ENCODE measurements at regions of chr20 and their contacts with region 1.

Region 1: DNA sequence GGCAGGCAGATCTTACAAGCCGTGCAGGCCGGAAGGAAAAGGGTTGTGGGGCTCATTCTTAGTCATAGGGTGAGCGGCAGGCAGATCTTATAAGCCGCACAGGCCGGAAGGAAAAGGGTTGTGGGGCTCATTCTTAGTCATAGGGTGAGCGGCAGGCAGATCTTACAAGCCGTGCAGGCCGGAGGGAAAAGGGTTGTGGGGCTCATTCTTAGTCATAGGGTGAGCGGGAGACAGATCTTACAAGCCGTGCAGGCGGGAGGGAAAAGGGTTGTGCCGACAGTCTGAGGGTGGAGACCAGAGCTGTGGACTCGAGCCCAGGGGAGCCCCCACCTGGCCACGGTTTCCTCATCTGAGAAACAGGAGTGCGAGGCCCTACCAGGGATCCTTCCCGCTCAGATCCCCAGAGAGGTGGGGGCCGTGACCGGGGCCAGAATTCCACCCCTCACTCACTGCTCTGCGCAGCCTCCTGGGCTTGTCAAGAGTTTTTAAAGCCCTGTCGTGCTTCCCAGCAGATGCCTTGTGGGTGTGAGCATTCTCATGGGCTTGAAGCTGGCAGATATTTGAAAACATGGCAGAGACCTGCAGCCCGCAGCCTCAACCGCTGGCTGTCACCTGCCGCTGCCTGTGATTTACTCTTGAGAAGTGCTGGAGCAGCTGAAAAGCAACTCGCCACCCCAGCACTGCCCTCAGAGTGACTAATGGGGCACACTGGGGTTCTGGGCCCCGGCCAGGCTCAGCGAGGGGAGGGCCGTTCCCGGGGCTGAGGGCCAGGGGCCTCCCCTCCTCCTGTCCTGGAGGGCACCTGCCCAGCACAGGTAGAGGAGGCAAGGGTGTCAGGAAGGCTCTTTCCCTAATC is 31.9 kb downstream of the NTSR1 start:
- DNase-seq: peak; percentile 90
- ATAC-seq: peak; percentile 86
- H3K4me3 Mint-ChIP-seq: peak overlapping the region; percentile 58
- H3K27ac Mint-ChIP-seq: peak overlapping the region; percentile 89
- H3K4me1 Mint-ChIP-seq: peaks cover 52% of the 10 kb centered on the region
- H3K27me3 Mint-ChIP-seq: peaks cover 3% of the 10 kb centered on the region

Region 2: DNA sequence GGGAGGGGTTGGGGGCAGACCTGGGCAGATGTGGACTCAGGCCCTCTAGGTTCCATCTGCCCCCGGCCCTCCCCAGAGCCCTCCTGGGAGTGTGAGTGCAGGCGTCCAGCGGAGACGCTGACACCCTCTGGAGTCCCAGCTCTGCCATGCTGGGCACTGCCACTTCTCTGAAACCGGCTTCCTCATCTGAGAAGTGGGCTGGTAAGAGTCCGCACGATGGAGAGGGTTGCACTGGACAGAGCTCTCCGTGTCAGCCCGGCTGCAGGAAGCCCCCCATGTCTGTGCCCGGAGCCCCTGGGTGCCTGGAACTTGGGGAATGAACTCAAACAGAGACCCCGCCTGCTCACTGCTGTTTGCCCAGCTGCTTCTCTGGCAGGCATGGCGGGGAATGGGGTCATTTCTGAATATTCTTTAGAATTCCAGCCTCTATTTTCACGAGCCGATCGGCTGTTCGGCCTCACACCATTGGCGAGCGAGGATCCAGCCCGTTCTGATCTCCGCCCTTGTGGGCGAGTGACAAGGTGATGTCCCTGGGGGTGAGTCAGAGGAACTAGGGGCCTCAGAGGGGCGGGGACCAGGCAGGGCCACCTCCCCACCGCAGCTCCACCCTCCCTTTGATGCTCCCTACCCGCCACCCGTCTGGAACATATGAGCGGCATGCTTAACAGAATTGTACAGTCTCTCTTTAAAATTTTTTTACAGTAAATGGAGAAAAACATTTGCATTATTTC is 216.9 kb before region 1 on chr20:
- CTCF ChIA-PET with region 1: no interaction called
- POLR2A ChIA-PET with region 1: no interaction called
- intact Hi-C with region 1: loop called in 1 of 2 experiments (anchors 1 kb)
- DNase-seq: peak; percentile 92
- ATAC-seq: peak; percentile 99
- H3K4me3 Mint-ChIP-seq: no peak overlapping the region
- H3K27ac Mint-ChIP-seq: peak overlapping the region; percentile 47
- H3K4me1 Mint-ChIP-seq: peaks cover 14% of the 10 kb centered on the region
- H3K27me3 Mint-ChIP-seq: peaks cover 7% of the 10 kb centered on the region

Region 3: GRCh38 chr20:62623488-62624324 is 116.8 kb before region 1 on chr20:
- CTCF ChIA-PET with region 1: no interaction called
- POLR2A ChIA-PET with region 1: no interaction called
- intact Hi-C with region 1: loop called in 1 of 2 experiments (anchors 1 kb)
- DNase-seq: peak; percentile 97
- ATAC-seq: peak; percentile 91
- H3K4me3 Mint-ChIP-seq: peak overlapping the region; percentile 69
- H3K27ac Mint-ChIP-seq: peak overlapping the region; percentile 96
- H3K4me1 Mint-ChIP-seq: peaks cover 26% of the 10 kb centered on the region
- H3K27me3 Mint-ChIP-seq: no peaks in the 10 kb centered on the region

Region 4: GRCh38 chr20:62652051-62652926 is 88.2 kb before region 1 on chr20:
- CTCF ChIA-PET with region 1: no interaction called
- POLR2A ChIA-PET with region 1: no interaction called
- intact Hi-C with region 1: loop called in 1 of 2 experiments (anchors 1 kb)
- DNase-seq: peak; percentile 82
- ATAC-seq: peak; percentile 81
- H3K4me3 Mint-ChIP-seq: peak overlapping the region; percentile 65
- H3K27ac Mint-ChIP-seq: peak overlapping the region; percentile 61
- H3K4me1 Mint-ChIP-seq: peaks cover 35% of the 10 kb centered on the region
- H3K27me3 Mint-ChIP-seq: no peaks in the 10 kb centered on the region

Region 5: GRCh38 chr20:62721511-62722197 is 18.9 kb before region 1 on chr20:
- CTCF ChIA-PET with region 1: no interaction called
- POLR2A ChIA-PET with region 1: interaction called, 3 read pairs
- intact Hi-C with region 1: loop called (anchors 1 kb)
- DNase-seq: no peak
- ATAC-seq: peak; percentile 88
- H3K4me3 Mint-ChIP-seq: no peak overlapping the region
- H3K27ac Mint-ChIP-seq: no peak overlapping the region
- H3K4me1 Mint-ChIP-seq: peaks cover 23% of the 10 kb centered on the region
- H3K27me3 Mint-ChIP-seq: no peaks in the 10 kb centered on the region

Region 6: GRCh38 chr20:62776692-62777527 is 36.4 kb after region 1 on chr20:
- CTCF ChIA-PET with region 1: no interaction called
- POLR2A ChIA-PET with region 1: no interaction called
- intact Hi-C with region 1: loop called (anchors 1 to 5 kb)
- DNase-seq: peak; percentile 80
- ATAC-seq: peak; percentile 87
- H3K4me3 Mint-ChIP-seq: peak overlapping the region; percentile 48
- H3K27ac Mint-ChIP-seq: peak overlapping the region; percentile 93
- H3K4me1 Mint-ChIP-seq: peaks cover 52% of the 10 kb centered on the region
- H3K27me3 Mint-ChIP-seq: no peaks in the 10 kb centered on the region

Region 7: GRCh38 chr20:62921119-62921687 is 180.7 kb after region 1 on chr20:
- CTCF ChIA-PET with region 1: no interaction called
- POLR2A ChIA-PET with region 1: no interaction called
- intact Hi-C with region 1: loop called in 1 of 2 experiments (anchors 1 kb)
- DNase-seq: peak; percentile 87
- ATAC-seq: peak; percentile 67
- H3K4me3 Mint-ChIP-seq: peak overlapping the region; percentile 13
- H3K27ac Mint-ChIP-seq: peak overlapping the region; percentile 75
- H3K4me1 Mint-ChIP-seq: peaks cover 76% of the 10 kb centered on the region
- H3K27me3 Mint-ChIP-seq: no peaks in the 10 kb centered on the region